ENCODE measurements at regions of chr20 and their contacts with region 1.

Region 1: DNA sequence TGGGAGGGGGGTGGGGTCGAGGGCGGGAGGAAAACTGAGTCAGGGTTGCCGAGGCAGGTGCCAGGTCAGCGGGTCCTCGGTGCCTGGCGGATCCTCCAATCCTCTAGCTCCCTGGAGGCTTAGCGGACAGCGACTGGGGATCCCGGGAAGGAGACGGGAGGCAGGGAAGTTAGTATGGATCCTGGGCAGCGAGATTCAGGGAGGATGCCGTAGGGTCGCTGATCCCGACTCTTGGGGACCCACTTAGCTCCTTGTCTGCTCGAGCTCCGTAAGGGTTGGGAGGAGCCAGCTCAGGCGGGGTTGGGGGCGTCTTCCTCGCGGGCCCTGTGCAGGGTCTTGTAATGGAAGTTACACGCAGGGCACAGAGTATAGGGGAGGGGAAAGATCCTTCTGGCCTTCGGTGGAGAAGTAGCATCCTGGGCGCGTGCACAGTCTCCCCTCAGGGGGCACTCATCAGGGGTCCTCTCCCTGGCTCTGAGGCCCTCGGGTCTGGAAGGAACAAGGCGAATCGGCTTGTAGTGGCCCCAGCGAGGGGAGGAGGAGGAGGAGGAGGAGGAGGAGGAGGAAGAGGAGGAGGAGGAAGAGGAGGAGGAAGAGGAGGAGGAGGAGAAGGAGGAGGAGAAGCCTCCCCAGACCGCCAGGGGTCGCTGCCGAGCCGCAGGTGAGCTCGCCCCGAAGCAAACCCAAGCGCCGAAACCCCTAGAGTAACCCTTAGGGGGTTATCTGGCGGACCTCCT is 6.4 kb upstream of the SLC12A5 start:
- DNase-seq: peak; percentile 93
- H3K4me3 Mint-ChIP-seq: peak overlapping the region; percentile 80
- H3K27ac Mint-ChIP-seq: no peak overlapping the region
- H3K4me1 Mint-ChIP-seq: peaks cover 17% of the 10 kb centered on the region
- H3K27me3 Mint-ChIP-seq: peaks cover 43% of the 10 kb centered on the region

Region 2: DNA sequence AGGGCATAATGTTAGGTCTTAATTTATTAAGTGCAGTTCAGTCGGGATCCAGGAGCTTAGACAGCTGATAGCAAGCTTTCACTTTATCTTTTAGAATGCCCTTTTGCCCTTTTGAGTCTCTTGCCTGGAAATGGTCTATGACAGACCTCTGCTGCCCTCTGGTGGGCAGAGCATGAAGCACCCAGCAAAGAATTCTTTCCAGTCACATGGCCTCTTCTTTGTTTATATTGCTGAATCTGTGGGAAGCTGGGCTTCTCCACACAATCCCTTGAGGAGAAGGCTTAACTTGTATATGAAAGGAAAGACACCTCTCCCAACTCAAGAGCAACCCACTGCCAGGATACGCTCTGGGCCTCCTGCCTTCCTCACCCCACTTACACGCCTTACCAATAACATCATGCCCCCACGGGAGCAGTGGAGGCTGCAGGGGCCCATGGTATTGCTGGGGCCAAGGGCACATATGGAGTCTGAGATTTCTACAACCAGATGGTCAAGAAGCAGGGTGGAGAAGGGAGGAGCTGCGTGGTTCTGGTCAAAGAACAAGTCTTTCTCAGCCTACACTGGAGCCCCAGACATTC is 251.3 kb before region 1 on chr20:
- intact Hi-C with region 1: no loop called
- DNase-seq: peak; percentile 94
- H3K4me3 Mint-ChIP-seq: no peak overlapping the region
- H3K27ac Mint-ChIP-seq: no peak overlapping the region
- H3K4me1 Mint-ChIP-seq: peaks cover 8% of the 10 kb centered on the region
- H3K27me3 Mint-ChIP-seq: peaks cover 12% of the 10 kb centered on the region

Region 3: GRCh38 chr20:46060301-46060881 is 37.8 kb after region 1 on chr20:
- intact Hi-C with region 1: loop called (anchors 5 kb)
- DNase-seq: no peak
- H3K4me3 Mint-ChIP-seq: peak overlapping the region; percentile 19
- H3K27ac Mint-ChIP-seq: peak overlapping the region; percentile 4
- H3K4me1 Mint-ChIP-seq: peaks cover 46% of the 10 kb centered on the region
- H3K27me3 Mint-ChIP-seq: peaks cover 31% of the 10 kb centered on the region

Region 4: GRCh38 chr20:46174469-46175128 is 152.0 kb after region 1 on chr20:
- intact Hi-C with region 1: loop called (anchors 1 kb)
- DNase-seq: peak; percentile 90
- H3K4me3 Mint-ChIP-seq: no peak overlapping the region
- H3K27ac Mint-ChIP-seq: no peak overlapping the region
- H3K4me1 Mint-ChIP-seq: no peaks in the 10 kb centered on the region
- H3K27me3 Mint-ChIP-seq: peaks cover 41% of the 10 kb centered on the region

Region 5: DNA sequence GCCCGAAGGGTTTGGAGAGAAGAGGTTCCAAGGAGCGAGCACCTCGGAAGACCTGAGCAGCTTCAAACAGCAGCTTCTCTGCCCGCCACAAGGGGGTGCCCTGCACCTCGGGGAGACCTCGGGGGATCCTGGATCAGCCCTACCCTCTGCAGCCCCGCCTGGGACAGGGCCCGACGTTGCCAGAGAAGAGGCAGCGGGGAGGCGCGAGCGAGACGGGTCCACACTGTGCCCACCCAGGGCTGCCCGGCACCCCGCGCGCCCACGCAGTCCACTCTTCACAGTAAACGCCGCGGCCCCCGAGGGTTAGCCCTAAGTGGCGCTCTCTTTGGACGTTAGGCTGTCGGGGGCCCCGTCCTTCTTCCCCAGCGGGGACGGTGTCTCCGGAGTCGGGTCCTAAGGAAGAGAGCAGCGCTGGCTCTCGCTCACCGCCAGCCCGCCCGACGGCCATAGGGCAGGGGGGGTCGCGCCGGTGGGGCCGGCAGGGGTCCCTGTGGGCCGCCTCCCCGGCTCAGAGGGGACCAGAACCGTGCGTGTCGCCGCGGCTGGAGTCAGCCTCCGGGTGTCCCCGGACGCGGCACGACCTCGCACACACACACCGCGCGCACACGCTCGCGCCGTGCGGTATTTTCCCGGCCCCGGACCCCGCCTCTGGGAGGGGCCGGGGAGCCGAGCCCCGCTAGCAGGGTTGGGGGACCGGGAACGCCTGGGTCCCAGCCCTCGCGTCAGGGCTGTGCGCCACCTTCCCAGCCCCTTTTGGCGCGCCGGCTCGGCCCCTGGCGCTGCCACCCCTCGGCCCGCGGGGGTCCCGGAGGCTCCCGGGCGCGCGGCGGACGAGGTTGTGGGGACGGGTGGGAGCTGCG is 284.8 kb after region 1 on chr20:
- intact Hi-C with region 1: loop called (anchors 5 kb)
- DNase-seq: peak; percentile 90
- H3K4me3 Mint-ChIP-seq: no peak overlapping the region
- H3K27ac Mint-ChIP-seq: no peak overlapping the region
- H3K4me1 Mint-ChIP-seq: peaks cover 4% of the 10 kb centered on the region
- H3K27me3 Mint-ChIP-seq: peaks cover 75% of the 10 kb centered on the region